ENCODE measurements at regions of chr13 and their contacts with region 1.

Region 1: GRCh38 chr13:32125221-32125631 is 93.7 kb downstream of the FRY start:
- DNase-seq: no peak
- H3K4me3 ChIP-seq: no peak overlapping the region
- H3K27ac ChIP-seq: no peak overlapping the region
- H3K4me1 ChIP-seq: no peaks in the 10 kb centered on the region
- CTCF ChIP-seq: no peak

Region 2: DNA sequence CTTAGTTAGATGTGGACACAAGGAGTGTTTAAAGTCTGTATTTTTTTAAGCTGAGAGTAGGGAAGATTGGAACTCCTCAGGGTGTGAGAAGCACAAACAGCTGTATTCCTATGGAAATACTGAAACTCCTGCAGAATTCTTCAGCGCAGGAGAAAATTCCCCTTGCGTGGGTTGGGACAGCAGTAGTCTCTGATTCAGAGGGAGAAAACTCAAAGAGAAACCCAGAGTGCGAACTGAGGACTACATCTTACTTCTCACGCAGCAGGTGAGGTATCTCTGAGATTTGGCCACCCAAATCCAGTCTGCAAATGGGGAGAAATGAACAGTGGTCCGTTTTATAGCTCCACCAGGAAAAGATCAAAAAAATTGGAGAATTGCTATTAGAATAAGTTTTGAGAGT is 32.7 kb before region 1 on chr13:
- CTCF ChIA-PET with region 1: no interaction called
- POLR2A ChIA-PET with region 1: no interaction called
- intact Hi-C with region 1: loop called (anchors 5 kb)
- DNase-seq: no peak
- H3K4me3 ChIP-seq: no peak overlapping the region
- H3K27ac ChIP-seq: no peak overlapping the region
- H3K4me1 ChIP-seq: no peaks in the 10 kb centered on the region
- CTCF ChIP-seq: no peak

Region 3: GRCh38 chr13:32105653-32106313 is 19.4 kb before region 1 on chr13:
- CTCF ChIA-PET with region 1: no interaction called
- POLR2A ChIA-PET with region 1: no interaction called
- intact Hi-C with region 1: no loop called
- DNase-seq: no peak
- H3K4me3 ChIP-seq: no peak overlapping the region
- H3K27ac ChIP-seq: no peak overlapping the region
- H3K4me1 ChIP-seq: no peaks in the 10 kb centered on the region
- CTCF ChIP-seq: no peak

Region 4: GRCh38 chr13:33279414-33280273 is 1154.4 kb after region 1 on chr13:
- CTCF ChIA-PET with region 1: no interaction called
- POLR2A ChIA-PET with region 1: no interaction called
- intact Hi-C with region 1: no loop called
- DNase-seq: no peak
- H3K4me3 ChIP-seq: no peak overlapping the region
- H3K27ac ChIP-seq: no peak overlapping the region
- H3K4me1 ChIP-seq: no peaks in the 10 kb centered on the region
- CTCF ChIP-seq: no peak